Activated CD8-positive, alpha-beta memory T cell treated with anti-CD3 and anti-CD28 coated beads, Interleukin-2, amount 10 ng/mL, durations not matched to agents 7 days and 5 days (primary cell): ENCODE measurements at regions of chr2 and their contacts with region 1.

Region 1: DNA sequence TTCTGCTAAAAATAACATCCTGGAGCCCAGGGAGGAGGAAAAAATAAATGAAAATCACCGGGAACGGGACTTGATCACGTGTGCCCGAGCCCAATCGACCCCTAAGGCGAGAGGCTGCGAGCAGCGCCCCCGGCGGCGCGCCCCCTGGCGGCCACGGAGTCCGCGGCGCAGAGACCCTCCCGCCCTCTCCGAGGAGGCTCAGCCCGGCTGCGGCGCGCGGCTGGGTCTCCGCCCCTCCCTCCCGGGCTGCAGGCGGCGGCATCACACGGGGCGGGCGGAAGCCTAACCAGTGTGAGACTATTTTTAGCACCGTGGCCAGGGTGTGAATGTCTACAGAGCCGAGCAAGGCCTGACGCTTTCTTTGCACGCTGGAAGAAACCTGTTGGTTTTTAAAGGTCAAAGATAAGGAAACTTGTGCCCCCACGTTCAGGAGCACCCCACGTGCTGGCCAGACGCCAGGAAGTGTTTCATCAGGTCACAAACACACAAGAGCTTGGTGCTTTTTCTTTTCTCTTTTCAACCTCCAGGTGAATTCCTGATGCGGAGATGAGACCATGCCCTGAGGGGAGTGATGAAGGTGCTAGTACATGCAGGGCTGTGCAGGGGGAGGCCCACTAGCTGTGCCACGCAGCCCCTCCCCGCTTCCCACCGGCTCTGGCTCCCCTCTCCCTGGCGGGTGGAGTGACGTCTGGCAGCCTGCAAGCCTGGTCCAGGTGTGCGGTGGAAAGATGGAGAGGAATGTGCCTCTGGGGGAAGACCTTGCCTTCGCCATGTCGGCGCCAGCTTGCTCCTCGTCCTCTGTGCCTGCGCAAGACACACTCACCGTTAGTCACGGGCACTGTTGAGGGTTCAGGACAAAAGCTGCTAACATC is 35.3 kb upstream of the DNMT3A start:
- DNase-seq: peak; percentile 97
- ATAC-seq: peak; percentile 100
- H3K4me3 Mint-ChIP-seq: peak overlapping the region; percentile 67
- H3K27ac Mint-ChIP-seq: peak overlapping the region; percentile 98
- H3K4me1 Mint-ChIP-seq: peaks cover 31% of the 10 kb centered on the region
- H3K27me3 Mint-ChIP-seq: no peaks in the 10 kb centered on the region

Region 2: DNA sequence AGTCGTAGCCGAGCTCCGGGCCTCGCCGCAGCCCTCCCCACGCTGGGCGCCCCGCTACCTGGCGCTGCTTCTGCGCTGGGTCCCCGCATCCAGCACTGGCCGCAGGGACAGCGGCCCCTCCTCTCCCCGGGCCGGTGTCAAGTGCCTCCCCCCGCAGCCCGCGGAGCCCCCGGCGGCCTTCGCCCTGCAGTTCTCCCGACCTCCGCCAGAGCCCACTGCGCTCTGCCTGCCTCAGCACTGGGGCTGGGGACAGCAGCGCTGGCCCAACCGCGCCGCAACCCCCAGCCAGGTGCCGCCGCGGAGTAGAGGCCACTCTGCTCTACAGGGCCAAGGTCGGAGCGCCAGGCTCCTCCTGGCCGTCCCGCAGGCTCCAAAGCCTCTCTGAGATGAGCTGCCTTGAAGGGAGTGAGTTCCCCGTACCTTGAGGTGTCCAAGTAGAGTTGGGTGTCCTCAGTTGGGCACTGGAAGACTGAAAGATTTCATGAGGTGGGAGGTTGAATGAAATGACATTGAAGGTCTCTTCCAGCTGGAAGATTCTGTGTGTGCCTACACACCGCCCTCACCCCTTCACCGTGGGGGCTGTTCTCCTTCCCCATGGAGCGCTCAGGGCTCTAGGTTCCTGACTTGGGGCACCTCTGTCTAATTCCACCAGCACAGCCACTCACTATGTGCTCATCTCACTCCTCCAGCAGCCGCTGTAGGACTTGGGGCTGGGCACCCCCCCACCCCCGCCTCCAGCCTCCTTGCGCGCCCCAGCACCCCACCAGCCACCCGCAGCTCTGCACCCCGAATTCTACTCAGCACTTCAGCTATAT is 34.4 kb before region 1 on chr2:
- CTCF ChIA-PET with region 1: interaction called, 13 read pairs
- DNase-seq: peak; percentile 89
- ATAC-seq: peak; percentile 91
- H3K4me3 Mint-ChIP-seq: peak overlapping the region; percentile 71
- H3K27ac Mint-ChIP-seq: peak overlapping the region; percentile 69
- H3K4me1 Mint-ChIP-seq: peaks cover 30% of the 10 kb centered on the region
- H3K27me3 Mint-ChIP-seq: no peaks in the 10 kb centered on the region

Region 3: DNA sequence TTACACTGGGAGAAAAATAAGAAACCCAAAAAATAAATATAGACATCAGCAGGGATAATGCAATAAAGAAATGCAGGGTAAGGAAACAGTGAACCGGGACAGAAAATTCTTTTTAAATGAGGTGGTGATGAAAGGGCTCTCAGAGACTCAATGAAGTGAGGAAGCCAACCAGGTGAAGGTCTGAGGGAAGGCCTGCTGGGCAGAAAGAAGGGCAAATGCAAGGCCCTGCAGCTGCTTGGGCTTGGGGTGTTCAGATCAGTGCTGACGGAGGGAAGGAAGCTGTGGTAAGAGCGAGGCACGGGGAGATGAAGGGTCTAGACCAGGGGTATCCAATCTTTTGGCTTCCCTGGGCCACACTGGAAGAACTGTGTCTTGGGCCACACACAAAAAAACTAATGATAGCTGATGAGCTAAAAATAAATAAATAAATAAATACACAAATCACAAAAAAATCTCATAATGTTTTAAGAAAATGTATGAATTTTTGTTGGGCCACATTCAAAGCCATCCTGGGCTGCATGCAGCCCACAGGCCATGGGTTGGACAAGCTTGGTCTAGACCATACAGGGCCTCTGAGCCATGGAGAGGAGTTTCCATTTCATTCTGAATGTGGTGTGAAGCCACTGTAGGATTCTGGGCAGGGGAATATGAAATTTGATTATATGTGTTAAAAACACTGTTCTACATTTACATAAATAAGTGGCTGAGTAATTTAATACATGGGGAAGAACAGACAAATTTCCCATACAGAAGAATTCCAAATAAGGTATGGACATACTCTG is 61.1 kb after region 1 on chr2:
- CTCF ChIA-PET with region 1: no interaction called
- DNase-seq: no peak
- ATAC-seq: no peak
- H3K4me3 Mint-ChIP-seq: no peak overlapping the region
- H3K27ac Mint-ChIP-seq: no peak overlapping the region
- H3K4me1 Mint-ChIP-seq: peaks cover 1% of the 10 kb centered on the region
- H3K27me3 Mint-ChIP-seq: no peaks in the 10 kb centered on the region

Region 4: GRCh38 chr2:25453199-25453905 is 76.4 kb after region 1 on chr2:
- CTCF ChIA-PET with region 1: interaction called, 10 read pairs
- DNase-seq: peak; percentile 65
- ATAC-seq: peak; percentile 98
- H3K4me3 Mint-ChIP-seq: peak overlapping the region; percentile 33
- H3K27ac Mint-ChIP-seq: peak overlapping the region; percentile 93
- H3K4me1 Mint-ChIP-seq: peaks cover 29% of the 10 kb centered on the region
- H3K27me3 Mint-ChIP-seq: no peaks in the 10 kb centered on the region